ENCODE measurements at regions of chr15 and their contacts with region 1.

Region 1: DNA sequence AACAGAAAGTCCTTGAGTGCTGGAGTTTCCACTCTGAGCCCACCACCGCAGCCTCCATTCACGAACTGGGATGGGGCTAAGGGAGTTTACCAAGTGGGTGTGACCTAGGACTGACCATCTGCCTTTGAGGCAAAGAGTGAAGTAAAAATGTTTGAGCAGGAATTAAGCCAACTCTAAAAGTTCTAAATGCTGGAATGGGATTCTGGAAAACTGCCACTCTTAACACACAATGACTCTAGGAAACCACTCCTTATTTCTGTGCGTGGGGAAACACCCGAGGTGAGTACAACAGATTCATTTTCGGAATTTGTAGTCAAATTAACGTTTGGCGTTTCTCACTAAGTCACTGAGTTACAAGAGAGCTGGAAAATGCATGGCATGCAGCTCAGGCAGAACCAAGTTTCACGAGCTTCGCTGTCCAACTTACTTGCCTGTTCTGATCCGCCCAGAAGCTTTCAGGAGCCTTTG is 31.6 kb downstream of the ISL2 start:
- DNase-seq: peak; percentile 14
- ATAC-seq: peak; percentile 70
- H3K4me3 ChIP-seq: peak overlapping the region; percentile 2; the same call in 1 of the 2 replicates
- H3K27ac ChIP-seq: no peak overlapping the region
- H3K4me1 ChIP-seq: peaks cover 10% of the 10 kb centered on the region
- H3K27me3 ChIP-seq: no peaks in the 10 kb centered on the region
- CTCF ChIP-seq: no peak

Region 2: GRCh38 chr15:76163475-76163881 is 204.7 kb before region 1 on chr15:
- CTCF ChIA-PET with region 1: no interaction called
- POLR2A ChIA-PET with region 1: no interaction called
- intact Hi-C with region 1: no loop called
- DNase-seq: no peak
- ATAC-seq: no peak; the same call in 1 of the 2 replicates
- H3K4me3 ChIP-seq: no peak overlapping the region
- H3K27ac ChIP-seq: no peak overlapping the region
- H3K4me1 ChIP-seq: no peaks in the 10 kb centered on the region
- H3K27me3 ChIP-seq: no peaks in the 10 kb centered on the region
- CTCF ChIP-seq: no peak

Region 3: GRCh38 chr15:76380249-76380648 is 12.1 kb after region 1 on chr15:
- CTCF ChIA-PET with region 1: no interaction called
- POLR2A ChIA-PET with region 1: interaction called, 13 read pairs
- intact Hi-C with region 1: no loop called
- DNase-seq: no peak
- ATAC-seq: no peak
- H3K4me3 ChIP-seq: no peak overlapping the region
- H3K27ac ChIP-seq: no peak overlapping the region
- H3K4me1 ChIP-seq: peaks cover 11% of the 10 kb centered on the region
- H3K27me3 ChIP-seq: no peaks in the 10 kb centered on the region
- CTCF ChIP-seq: no peak

Region 4: DNA sequence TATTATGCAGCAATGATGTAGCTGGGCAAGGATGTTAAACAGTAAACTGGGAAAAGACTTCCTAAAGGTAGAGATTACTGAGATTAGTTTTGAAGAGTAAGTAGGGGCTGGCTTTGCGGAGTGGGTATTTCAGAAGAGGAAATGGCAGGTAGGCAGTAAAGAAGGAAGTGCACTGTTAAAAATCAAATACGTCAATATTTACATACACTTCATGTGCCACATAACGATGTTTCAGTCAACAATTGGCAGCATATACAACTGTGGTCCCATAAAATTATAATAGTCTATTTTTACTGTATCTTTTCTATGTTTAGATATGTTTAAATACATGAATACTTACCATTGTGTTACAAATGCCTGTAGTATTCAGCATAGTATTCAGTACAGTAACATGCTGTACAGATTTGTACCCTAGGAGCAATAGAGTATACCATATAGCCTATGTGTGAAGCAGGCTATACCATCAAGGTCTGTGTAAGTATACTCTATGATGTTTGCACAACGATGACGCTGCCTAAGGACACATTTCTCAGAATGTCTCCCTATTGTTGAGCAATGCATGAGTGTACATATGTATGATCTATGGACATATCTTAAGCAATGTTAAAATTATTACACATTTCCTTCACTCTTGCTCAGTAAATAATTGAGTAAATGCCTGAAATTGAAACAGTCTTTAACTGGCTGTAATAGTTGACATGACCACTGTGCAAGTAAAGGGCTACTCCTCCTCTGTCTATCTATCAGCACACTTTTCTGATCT is 165.1 kb after region 1 on chr15:
- CTCF ChIA-PET with region 1: no interaction called
- POLR2A ChIA-PET with region 1: no interaction called
- intact Hi-C with region 1: loop called (anchors 10 kb)
- DNase-seq: peak; percentile 94
- ATAC-seq: peak; percentile 96
- H3K4me3 ChIP-seq: no peak overlapping the region
- H3K27ac ChIP-seq: peak overlapping the region; percentile 73
- H3K4me1 ChIP-seq: peaks cover 18% of the 10 kb centered on the region
- H3K27me3 ChIP-seq: no peaks in the 10 kb centered on the region
- CTCF ChIP-seq: no peak

Region 5: DNA sequence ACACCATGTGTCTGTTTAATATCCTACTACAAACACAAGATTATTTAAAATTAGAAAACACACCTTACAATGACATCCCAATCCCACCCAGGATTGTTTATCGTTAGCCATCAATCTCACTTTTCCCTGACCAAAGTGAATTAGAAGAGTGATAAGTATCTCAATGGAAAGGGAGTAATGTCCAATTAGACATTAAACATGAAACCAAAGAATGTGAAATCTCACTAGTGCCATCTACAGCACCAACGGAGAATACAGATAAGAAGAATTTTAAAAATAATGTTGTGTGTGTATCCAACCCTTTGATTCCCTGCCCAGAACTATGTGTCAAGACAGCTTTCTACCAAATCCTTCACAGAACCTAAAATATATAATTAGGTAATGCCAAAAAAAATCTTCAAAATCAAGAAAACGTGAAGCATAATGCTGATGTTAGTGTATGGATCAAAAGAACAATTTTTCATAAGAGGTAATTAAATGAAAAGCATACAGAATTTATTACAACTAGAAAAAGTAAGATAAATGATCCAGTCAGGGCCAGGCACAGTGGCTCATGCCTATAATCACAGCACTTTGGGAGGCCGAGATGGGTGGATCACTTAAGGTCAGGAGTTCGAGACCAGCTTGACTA is 472.8 kb after region 1 on chr15:
- CTCF ChIA-PET with region 1: no interaction called
- POLR2A ChIA-PET with region 1: no interaction called
- intact Hi-C with region 1: loop called (anchors 10 kb)
- DNase-seq: peak; percentile 53
- ATAC-seq: peak; percentile 58; the same call in 1 of the 2 replicates
- H3K4me3 ChIP-seq: no peak overlapping the region
- H3K27ac ChIP-seq: no peak overlapping the region
- H3K4me1 ChIP-seq: no peaks in the 10 kb centered on the region
- H3K27me3 ChIP-seq: no peaks in the 10 kb centered on the region
- CTCF ChIP-seq: peak; percentile 79

Measured in PC-3 (cell line).